H1 (cell line): ENCODE measurements at regions of chr11 and their contacts with region 1.

Region 1: GRCh38 chr11:78926633-78927338 is 352.1 kb upstream of the NARS2 start:
- DNase-seq: no peak
- H3K4me3 ChIP-seq: no peak overlapping the region
- H3K27ac ChIP-seq: no peak overlapping the region
- H3K4me1 ChIP-seq: peaks cover 8 to 22% (median 18%) of the 10 kb centered on the region in 4 experiments; a peak in 6 of 7 replicates
- H3K27me3 ChIP-seq: peaks cover 22 to 46% (median 44%) of the 10 kb centered on the region in 4 experiments
- CTCF ChIP-seq: no peak
- EP300 ChIP-seq: no peak
- POLR2A ChIP-seq: no peak
- RAD21 ChIP-seq: no peak

Region 2: DNA sequence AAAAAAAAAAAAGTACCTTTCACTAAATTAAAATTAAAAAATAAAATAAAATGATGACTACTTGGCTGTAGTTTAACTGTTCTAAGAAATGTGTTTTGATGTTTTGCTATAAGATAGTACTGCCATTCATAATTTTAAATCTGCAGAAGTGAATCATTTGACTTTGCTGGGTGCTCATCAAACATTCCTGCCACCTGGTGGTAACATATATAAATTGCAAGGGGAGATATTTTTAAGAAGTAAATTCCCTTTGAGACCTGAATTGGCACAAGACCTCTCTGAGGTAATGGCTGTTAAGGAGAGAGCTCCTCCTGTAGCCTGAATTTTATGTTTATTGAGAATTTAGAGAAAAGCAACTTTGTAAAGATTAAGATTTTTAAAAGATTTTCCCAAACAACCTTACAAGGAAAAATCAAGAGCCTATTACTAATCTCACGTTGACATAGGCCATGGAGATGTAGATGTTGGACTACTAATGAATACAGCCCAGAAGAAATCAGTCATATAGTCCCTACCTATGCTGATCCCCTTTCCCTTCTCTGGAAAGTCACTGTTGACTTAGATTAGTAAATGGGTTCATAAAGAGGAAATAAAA is 340.2 kb before region 1 on chr11:
- CTCF ChIA-PET with region 1: no interaction called
- POLR2A ChIA-PET with region 1: no interaction called
- DNase-seq: no peak
- H3K4me3 ChIP-seq: no peak overlapping the region
- H3K27ac ChIP-seq: no peak overlapping the region
- H3K4me1 ChIP-seq: no peaks in the 10 kb centered on the region
- H3K27me3 ChIP-seq: no peaks in the 10 kb centered on the region
- CTCF ChIP-seq: peak in 1 of 3 experiments; percentile 47; a peak in 2 of 4 replicates
- EP300 ChIP-seq: no peak
- POLR2A ChIP-seq: no peak
- RAD21 ChIP-seq: peak; percentile 35 to 45; a peak in 3 of 4 replicates

Region 3: GRCh38 chr11:78940500-78941225 is 13.9 kb after region 1 on chr11:
- CTCF ChIA-PET with region 1: interaction called, 5 read pairs
- POLR2A ChIA-PET with region 1: interaction called, 15 read pairs
- DNase-seq: peak; percentile 61 to 63
- H3K4me3 ChIP-seq: no peak overlapping the region
- H3K27ac ChIP-seq: no peak overlapping the region
- H3K4me1 ChIP-seq: peaks cover 7 to 20% (median 15%) of the 10 kb centered on the region in 4 experiments
- H3K27me3 ChIP-seq: peaks cover 0 to 2% (median 0%) of the 10 kb centered on the region in 4 experiments; a peak in 3 of 7 replicates
- CTCF ChIP-seq: no peak
- EP300 ChIP-seq: no peak
- POLR2A ChIP-seq: no peak
- RAD21 ChIP-seq: peak in 1 of 2 experiments; percentile 19; a peak in 1 of 4 replicates